Psoas muscle (tissue), 8 donors: ENCODE measurements at regions of chr4 and their contacts with region 1.

Region 1: DNA sequence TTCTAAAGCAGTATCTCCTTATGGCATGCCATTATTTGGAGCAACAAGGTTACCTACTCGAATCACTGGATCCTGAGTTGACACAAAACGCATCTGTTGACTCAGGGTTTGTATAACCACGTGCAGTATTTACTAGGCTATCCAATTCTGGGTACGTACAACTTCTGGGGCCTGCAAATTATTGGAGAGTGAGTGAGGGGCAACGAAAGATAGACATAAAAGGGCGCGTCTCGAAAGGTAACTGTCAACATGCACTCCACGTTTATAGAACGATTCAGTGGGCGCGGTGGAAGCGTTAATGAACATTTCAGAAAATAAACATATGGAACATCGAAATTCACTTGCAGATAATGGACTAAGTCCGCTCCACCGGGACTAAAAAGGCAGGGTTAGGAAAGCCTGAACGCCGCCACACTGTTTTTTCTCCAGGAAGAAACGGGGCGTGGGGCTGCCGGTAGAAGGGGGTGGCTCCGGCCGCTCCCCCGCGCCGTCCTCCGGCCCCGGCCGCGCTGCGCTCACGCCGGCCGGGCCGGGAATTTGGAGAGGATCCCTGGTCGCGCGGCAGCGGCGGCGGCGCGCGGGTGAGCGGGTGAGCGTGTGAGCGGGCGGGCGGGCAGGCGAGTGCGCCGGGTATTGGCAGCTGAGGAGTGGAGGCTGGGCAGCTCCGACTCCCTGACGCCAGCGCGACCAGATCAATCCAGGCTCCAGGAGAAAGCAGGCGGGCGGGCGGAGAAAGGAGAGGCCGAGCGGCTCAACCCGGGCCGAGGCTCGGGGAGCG is at the start of gene SMAD1:
- DNase-seq: peak; percentile 88 to 95
- ATAC-seq: peak; percentile 92 to 95 (median 94)
- H3K4me3 ChIP-seq: peak within 1 kb of the TSS; percentile 98
- H3K27ac ChIP-seq: peak within 1 kb of the TSS; percentile 99
- H3K4me1 ChIP-seq: peaks cover 40% of the 10 kb centered on the region
- H3K27me3 ChIP-seq: no peaks in the 10 kb centered on the region
- CTCF ChIP-seq: no peak
- total RNA-seq, gene SMAD1: 17.2 to 30.6 (median 21.9) TPM

Region 2: GRCh38 chr4:145234091-145234706 is 247.2 kb before region 1 on chr4:
- intact Hi-C with region 1: loop called in 1 of 2 experiments (anchors 5 kb)
- DNase-seq: no peak
- ATAC-seq: peak; percentile 74 to 91 (median 81)
- H3K4me3 ChIP-seq: no peak overlapping the region
- H3K27ac ChIP-seq: no peak overlapping the region
- H3K4me1 ChIP-seq: peaks cover 12% of the 10 kb centered on the region
- H3K27me3 ChIP-seq: no peaks in the 10 kb centered on the region
- CTCF ChIP-seq: peak; percentile 82

Region 3: DNA sequence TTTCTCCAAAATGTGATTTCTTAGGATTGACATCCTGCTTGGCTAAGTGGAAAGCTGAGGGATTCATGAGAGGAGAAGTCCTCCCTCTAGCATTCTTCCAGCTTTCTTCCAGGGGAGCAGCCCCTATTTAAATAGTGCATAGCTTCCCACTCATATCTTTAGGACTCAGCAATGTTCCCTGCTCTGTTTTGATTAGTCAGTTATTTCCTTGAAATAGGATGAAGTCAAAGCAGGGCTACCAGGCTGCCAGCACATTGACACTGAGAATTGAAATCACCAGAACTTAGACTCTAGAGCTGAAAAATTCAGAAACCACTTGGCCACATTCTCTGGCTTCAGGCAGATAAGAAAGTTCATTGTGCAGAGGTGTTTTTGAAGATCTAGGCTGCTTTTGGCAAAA is 74.4 kb before region 1 on chr4:
- intact Hi-C with region 1: no loop called
- DNase-seq: no peak
- ATAC-seq: no peak
- H3K4me3 ChIP-seq: no peak overlapping the region
- H3K27ac ChIP-seq: no peak overlapping the region
- H3K4me1 ChIP-seq: no peaks in the 10 kb centered on the region
- H3K27me3 ChIP-seq: no peaks in the 10 kb centered on the region
- CTCF ChIP-seq: no peak

Region 4: DNA sequence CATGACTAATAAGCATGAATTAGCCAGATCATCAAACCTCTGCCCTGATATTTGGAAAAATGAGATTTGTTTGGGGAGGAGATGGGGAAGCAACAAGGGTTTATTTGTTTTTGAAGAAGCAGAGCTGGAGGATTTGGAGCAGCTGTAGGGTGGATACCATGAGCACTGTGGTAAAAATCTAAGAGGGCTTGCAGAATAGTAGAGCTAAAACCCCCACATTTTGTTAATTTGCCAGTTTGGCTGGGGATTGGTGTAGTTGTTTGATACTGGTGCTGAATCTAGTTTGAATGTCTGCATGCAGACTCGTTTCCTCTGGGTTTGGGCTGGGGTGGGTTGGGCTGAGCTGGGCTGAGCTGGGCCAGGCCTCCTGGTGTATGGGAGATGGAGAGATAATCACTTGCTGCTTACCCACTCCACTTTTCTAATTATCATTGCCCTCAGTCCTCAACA is 44.0 kb after region 1 on chr4:
- intact Hi-C with region 1: loop called in 1 of 2 experiments (anchors 5 kb)
- DNase-seq: no peak
- ATAC-seq: no peak
- H3K4me3 ChIP-seq: no peak overlapping the region
- H3K27ac ChIP-seq: peak overlapping the region; percentile 21
- H3K4me1 ChIP-seq: peaks cover 28% of the 10 kb centered on the region
- H3K27me3 ChIP-seq: no peaks in the 10 kb centered on the region
- CTCF ChIP-seq: no peak

Region 5: GRCh38 chr4:145557720-145558119 is 76.4 kb after region 1 on chr4:
- intact Hi-C with region 1: loop called in 1 of 2 experiments (anchors 5 kb)
- DNase-seq: peak; percentile 44 to 55
- ATAC-seq: peak; percentile 72 to 97 (median 88)
- H3K4me3 ChIP-seq: no peak overlapping the region
- H3K27ac ChIP-seq: no peak overlapping the region
- H3K4me1 ChIP-seq: no peaks in the 10 kb centered on the region
- H3K27me3 ChIP-seq: no peaks in the 10 kb centered on the region
- CTCF ChIP-seq: peak; percentile 89

Region 6: GRCh38 chr4:145732895-145733880 is 251.8 kb after region 1 on chr4:
- intact Hi-C with region 1: loop called in 1 of 2 experiments (anchors 5 kb)
- DNase-seq: peak; percentile 97
- ATAC-seq: peak; percentile 66 to 78 (median 69)
- H3K4me3 ChIP-seq: peak overlapping the region; percentile 68
- H3K27ac ChIP-seq: peak overlapping the region; percentile 98
- H3K4me1 ChIP-seq: peaks cover 40% of the 10 kb centered on the region
- H3K27me3 ChIP-seq: no peaks in the 10 kb centered on the region
- CTCF ChIP-seq: peak; percentile 11